Dendritic cell treated with granulocyte-macrophage colony-stimulating factor and Interleukin-4, amounts not matched to agents 40 ng/mL and 50 ng/mL, for 4 days (primary cell): ENCODE measurements at regions of chr14 and their contacts with region 1.

Region 1: GRCh38 chr14:60288279-60288678 is 39.3 kb downstream of the PPM1A start:
- H3K4me3 Mint-ChIP-seq: no peak overlapping the region
- H3K27ac Mint-ChIP-seq: no peak overlapping the region
- H3K4me1 Mint-ChIP-seq: no peaks in the 10 kb centered on the region
- H3K27me3 Mint-ChIP-seq: no peaks in the 10 kb centered on the region

Region 2: DNA sequence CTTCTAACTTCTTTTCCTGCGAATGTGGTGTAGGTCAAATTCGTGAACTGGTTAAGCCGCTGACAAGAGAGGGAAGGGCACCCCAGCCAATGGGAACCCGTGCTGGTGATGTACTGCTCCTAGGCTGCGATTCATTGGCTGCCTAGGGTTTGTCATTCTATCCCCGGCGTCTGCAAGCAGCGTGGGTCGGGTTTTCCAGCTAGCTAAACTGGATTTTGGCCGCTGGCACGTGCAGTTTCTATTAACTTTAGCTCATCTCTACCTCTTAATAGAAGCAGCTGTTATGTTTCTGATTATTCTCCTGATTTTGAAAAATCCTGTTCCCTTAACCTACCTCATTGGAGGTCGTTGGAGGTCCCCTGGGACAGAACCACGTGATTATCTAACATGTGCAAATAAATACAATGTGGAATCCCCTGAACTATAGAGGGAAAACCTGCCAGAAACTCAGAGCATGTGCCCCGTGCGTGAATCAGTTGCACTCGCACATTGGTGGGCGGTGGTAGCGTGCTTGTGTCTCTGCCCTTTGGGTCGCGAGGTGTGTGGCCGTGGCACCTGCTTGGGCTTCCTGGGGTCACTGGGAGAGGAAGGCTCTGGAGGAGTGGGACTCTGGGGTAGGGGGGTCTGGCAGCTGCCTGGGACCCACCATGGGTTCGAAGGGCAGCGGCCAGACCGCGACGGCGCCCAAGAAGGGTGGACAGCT is 40.1 kb before region 1 on chr14:
- intact Hi-C with region 1: no loop called
- H3K4me3 Mint-ChIP-seq: peak overlapping the region; percentile 92
- H3K27ac Mint-ChIP-seq: peak overlapping the region; percentile 99
- H3K4me1 Mint-ChIP-seq: peaks cover 48% of the 10 kb centered on the region
- H3K27me3 Mint-ChIP-seq: no peaks in the 10 kb centered on the region

Region 3: GRCh38 chr14:60275942-60276341 is 12.3 kb before region 1 on chr14:
- intact Hi-C with region 1: loop called (anchors 2 kb)
- H3K4me3 Mint-ChIP-seq: no peak overlapping the region
- H3K27ac Mint-ChIP-seq: no peak overlapping the region
- H3K4me1 Mint-ChIP-seq: peaks cover 34% of the 10 kb centered on the region
- H3K27me3 Mint-ChIP-seq: no peaks in the 10 kb centered on the region

Region 4: GRCh38 chr14:60637479-60638315 is 349.4 kb after region 1 on chr14:
- intact Hi-C with region 1: no loop called
- H3K4me3 Mint-ChIP-seq: peak overlapping the region; percentile 67
- H3K27ac Mint-ChIP-seq: no peak overlapping the region
- H3K4me1 Mint-ChIP-seq: peaks cover 18% of the 10 kb centered on the region
- H3K27me3 Mint-ChIP-seq: peaks cover 91% of the 10 kb centered on the region